ENCODE measurements at regions of chr7 and their contacts with region 1.

Region 1: DNA sequence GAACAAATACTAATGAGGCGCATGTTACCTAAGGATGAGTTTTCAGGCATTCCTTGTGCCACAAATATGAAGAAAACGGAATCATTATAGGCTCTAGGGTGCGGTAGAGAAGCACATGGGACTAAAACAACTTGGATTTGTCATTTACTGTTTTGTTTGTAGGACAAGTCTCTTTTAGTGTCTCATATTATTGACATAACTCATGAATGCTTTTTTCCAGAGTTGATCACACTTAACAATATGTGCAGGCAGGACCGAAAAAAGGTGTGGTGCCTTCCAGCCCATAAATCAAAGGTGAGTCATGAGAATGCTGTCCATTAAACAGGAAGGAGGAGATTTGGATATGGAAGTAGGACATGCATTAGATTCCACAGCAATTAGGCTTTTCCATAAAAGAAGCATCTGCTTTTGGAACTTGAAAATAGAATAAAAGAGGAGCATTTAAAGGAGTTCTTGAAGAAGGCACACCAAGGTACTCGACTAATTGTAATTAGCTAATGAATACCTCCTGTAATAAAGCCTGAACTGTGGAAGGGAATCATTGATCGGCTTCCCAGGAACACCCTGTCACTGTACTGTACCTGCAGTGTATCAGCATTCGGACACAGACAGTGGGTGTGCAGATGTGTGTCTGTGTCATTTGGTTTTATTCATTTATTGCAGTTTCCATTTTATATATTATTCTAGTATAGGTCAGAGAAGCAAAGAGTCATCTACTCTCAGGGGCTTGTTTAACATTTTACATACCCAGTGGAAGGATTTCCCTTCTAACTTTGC is 119.7 kb upstream of the KLF14 start:
- DNase-seq: peak; percentile 92
- ATAC-seq: peak; percentile 72; the same call in 1 of the 2 replicates
- H3K4me3 ChIP-seq: no peak overlapping the region
- H3K27ac ChIP-seq: no peak overlapping the region
- H3K4me1 ChIP-seq: no peaks in the 10 kb centered on the region
- H3K27me3 ChIP-seq: no peaks in the 10 kb centered on the region
- CTCF ChIP-seq: no peak

Region 2: DNA sequence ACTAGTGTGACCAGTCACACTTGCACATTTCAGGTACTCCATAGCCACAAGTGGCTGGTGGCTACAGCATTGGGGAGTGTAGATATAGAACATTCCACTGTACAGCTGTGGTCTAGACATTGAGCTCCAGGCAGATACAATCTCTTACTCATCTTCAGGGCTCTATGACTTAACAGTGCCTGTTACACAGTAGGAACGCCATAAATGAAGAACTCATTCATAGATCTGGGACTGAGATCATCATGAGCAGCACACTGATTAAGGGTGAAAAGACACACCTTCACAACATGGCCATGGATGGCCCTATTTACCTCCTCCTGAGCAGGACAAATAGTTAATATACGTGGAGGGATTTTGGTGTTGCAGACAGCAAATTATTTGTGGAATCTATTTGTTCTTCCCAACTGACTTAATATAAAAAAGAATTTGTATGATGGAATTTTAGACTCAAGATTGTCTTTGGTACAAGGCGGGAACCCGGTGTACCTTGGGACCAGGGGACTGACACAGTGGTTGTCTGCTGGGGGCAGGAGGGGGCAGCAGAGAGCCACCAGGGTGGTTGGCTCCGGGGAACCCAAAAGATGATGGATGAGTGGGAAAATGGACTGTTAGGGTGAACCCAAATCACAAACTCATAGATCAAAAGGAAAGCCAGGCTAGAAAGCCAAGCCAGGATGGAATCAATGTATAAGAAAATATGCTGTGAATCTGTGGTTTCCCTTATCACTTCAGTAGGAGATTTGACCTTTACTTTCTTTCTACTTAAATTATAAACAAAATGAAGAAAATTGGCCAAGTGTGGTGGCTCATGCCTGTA is 611.3 kb before region 1 on chr7:
- CTCF ChIA-PET with region 1: no interaction called
- POLR2A ChIA-PET with region 1: no interaction called
- in situ Hi-C with region 1: no loop called
- intact Hi-C with region 1: no loop called
- DNase-seq: peak; percentile 24
- ATAC-seq: peak; percentile 96
- H3K4me3 ChIP-seq: no peak overlapping the region
- H3K27ac ChIP-seq: no peak overlapping the region
- H3K4me1 ChIP-seq: no peaks in the 10 kb centered on the region
- H3K27me3 ChIP-seq: no peaks in the 10 kb centered on the region
- CTCF ChIP-seq: peak; percentile 93

Region 3: GRCh38 chr7:130901209-130901783 is 47.6 kb after region 1 on chr7:
- CTCF ChIA-PET with region 1: no interaction called
- POLR2A ChIA-PET with region 1: no interaction called
- in situ Hi-C with region 1: no loop called
- intact Hi-C with region 1: no loop called
- DNase-seq: peak; percentile 76
- ATAC-seq: peak; percentile 13
- H3K4me3 ChIP-seq: peak overlapping the region in 1 of 2 experiments; percentile 33; a peak in 2 of 4 replicates
- H3K27ac ChIP-seq: peak overlapping the region; percentile 100
- H3K4me1 ChIP-seq: peaks cover 100% of the 10 kb centered on the region
- H3K27me3 ChIP-seq: no peaks in the 10 kb centered on the region
- CTCF ChIP-seq: no peak

Region 4: DNA sequence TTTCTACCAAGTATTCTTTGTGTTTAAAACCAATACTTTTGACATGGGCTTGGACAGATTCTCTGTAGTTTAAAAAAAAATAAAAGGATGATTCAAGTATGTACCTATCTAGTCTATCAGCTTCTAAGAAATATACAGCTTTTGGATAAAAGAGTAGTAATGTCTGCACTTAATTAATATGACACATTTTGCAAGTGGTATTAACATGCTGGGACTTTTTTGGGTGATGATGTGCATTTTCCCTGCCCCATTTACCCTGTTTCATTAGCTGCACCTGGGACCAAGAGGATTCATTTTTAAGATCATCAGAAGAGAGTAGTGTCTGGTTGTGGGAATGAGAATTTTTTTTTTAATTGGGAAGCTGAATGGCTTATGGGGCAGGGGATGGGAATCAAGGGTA is 116.5 kb after region 1 on chr7:
- CTCF ChIA-PET with region 1: no interaction called
- POLR2A ChIA-PET with region 1: interaction called, 10 read pairs
- in situ Hi-C with region 1: no loop called
- intact Hi-C with region 1: no loop called
- DNase-seq: no peak
- ATAC-seq: no peak
- H3K4me3 ChIP-seq: no peak overlapping the region
- H3K27ac ChIP-seq: peak overlapping the region; percentile 11; the same call in 1 of the 2 replicates
- H3K4me1 ChIP-seq: peaks cover 9% of the 10 kb centered on the region
- H3K27me3 ChIP-seq: no peaks in the 10 kb centered on the region
- CTCF ChIP-seq: no peak

Measured in Panc1 (cell line).